HCT116 (cell line): ENCODE measurements at regions of chr7 and their contacts with region 1.

Region 1: GRCh38 chr7:28853834-28854749 is 104.0 kb downstream of the TRIL start:
- DNase-seq: peak; percentile 63
- ATAC-seq: peak; percentile 89
- H3K4me3 ChIP-seq: peak overlapping the region; percentile 41 to 54
- H3K27ac ChIP-seq: no peak overlapping the region
- H3K4me1 ChIP-seq: peaks cover 23 to 36% of the 10 kb centered on the region in 2 experiments
- H3K27me3 ChIP-seq: peaks cover 21% of the 10 kb centered on the region
- CTCF ChIP-seq: peak; percentile 73 to 84 (median 74)
- POLR2A ChIP-seq: no peak
- RAD21 ChIP-seq: peak; percentile 77

Region 2: GRCh38 chr7:28298870-28299518 is 555.1 kb before region 1 on chr7:
- CTCF ChIA-PET with region 1: interaction called, 3 read pairs
- POLR2A ChIA-PET with region 1: no interaction called
- RAD21 ChIA-PET with region 1: no interaction called
- intact Hi-C with region 1: loop called (anchors 2 kb)
- DNase-seq: peak; percentile 48
- ATAC-seq: peak; percentile 89
- H3K4me3 ChIP-seq: no peak overlapping the region
- H3K27ac ChIP-seq: no peak overlapping the region
- H3K4me1 ChIP-seq: peaks cover 0 to 3% of the 10 kb centered on the region in 2 experiments; a peak in 2 of 4 replicates
- H3K27me3 ChIP-seq: no peaks in the 10 kb centered on the region
- CTCF ChIP-seq: peak; percentile 56 to 64 (median 59)
- POLR2A ChIP-seq: no peak
- RAD21 ChIP-seq: peak; percentile 74

Region 3: GRCh38 chr7:28389504-28390395 is 464.3 kb before region 1 on chr7:
- CTCF ChIA-PET with region 1: no interaction called
- POLR2A ChIA-PET with region 1: no interaction called
- RAD21 ChIA-PET with region 1: no interaction called
- intact Hi-C with region 1: loop called (anchors 5 kb)
- DNase-seq: peak; percentile 49
- ATAC-seq: peak; percentile 77
- H3K4me3 ChIP-seq: peak overlapping the region; percentile 7 to 21; a peak in 3 of 4 replicates
- H3K27ac ChIP-seq: no peak overlapping the region
- H3K4me1 ChIP-seq: no peaks in the 10 kb centered on the region
- H3K27me3 ChIP-seq: no peaks in the 10 kb centered on the region
- CTCF ChIP-seq: peak; percentile 60 to 91 (median 62)
- POLR2A ChIP-seq: no peak
- RAD21 ChIP-seq: peak; percentile 65

Region 4: GRCh38 chr7:28953633-28954032 is 99.5 kb after region 1 on chr7:
- CTCF ChIA-PET with region 1: no interaction called
- POLR2A ChIA-PET with region 1: no interaction called
- RAD21 ChIA-PET with region 1: no interaction called
- intact Hi-C with region 1: no loop called
- DNase-seq: no peak
- ATAC-seq: no peak
- H3K4me3 ChIP-seq: no peak overlapping the region
- H3K27ac ChIP-seq: no peak overlapping the region
- H3K4me1 ChIP-seq: no peaks in the 10 kb centered on the region
- H3K27me3 ChIP-seq: no peaks in the 10 kb centered on the region
- CTCF ChIP-seq: no peak
- POLR2A ChIP-seq: no peak
- RAD21 ChIP-seq: no peak

Region 5: DNA sequence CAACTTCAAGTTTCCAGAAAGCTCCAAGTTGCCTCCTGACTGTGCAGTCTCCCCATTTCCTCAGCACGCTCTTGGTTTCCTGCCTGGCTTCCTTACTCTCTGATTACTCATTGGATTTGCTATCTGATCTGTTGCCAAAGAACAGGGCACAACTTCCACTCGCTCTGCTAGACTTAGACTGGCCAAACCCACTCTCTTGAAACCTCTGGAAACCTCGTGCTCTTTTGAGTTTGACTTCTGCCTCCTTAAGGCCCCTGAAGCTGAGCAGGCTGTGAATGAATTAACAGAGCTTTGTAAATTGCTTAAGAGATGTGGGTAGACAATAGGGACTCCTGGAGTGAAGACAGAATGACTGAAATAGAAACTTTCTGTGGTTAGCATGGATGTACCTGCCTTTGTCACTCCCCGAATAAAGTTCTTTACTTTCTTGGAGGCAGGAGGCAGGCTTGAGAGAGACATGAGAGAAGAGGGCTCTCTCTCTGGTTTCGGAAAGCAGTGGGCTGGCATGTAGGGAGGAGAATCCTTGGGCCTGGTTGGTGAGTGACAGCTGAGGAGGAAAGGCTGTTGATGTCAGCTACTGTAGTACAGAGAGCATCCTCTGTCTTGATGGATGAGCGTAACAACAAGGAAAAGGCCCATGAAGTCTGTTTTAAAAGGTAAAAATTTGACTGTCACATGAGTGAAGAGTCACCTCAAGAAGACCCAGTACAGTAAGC is 411.3 kb after region 1 on chr7:
- CTCF ChIA-PET with region 1: no interaction called
- POLR2A ChIA-PET with region 1: no interaction called
- RAD21 ChIA-PET with region 1: no interaction called
- intact Hi-C with region 1: no loop called
- DNase-seq: no peak
- ATAC-seq: no peak
- H3K4me3 ChIP-seq: no peak overlapping the region
- H3K27ac ChIP-seq: no peak overlapping the region
- H3K4me1 ChIP-seq: peaks cover 4 to 5% of the 10 kb centered on the region in 2 experiments; a peak in 3 of 4 replicates
- H3K27me3 ChIP-seq: peaks cover 4% of the 10 kb centered on the region; the same call in 1 of the 2 replicates
- CTCF ChIP-seq: no peak
- POLR2A ChIP-seq: no peak
- RAD21 ChIP-seq: no peak

Region 6: GRCh38 chr7:29370531-29371314 is 516.6 kb after region 1 on chr7:
- CTCF ChIA-PET with region 1: no interaction called
- POLR2A ChIA-PET with region 1: no interaction called
- RAD21 ChIA-PET with region 1: no interaction called
- intact Hi-C with region 1: no loop called
- DNase-seq: peak; percentile 43
- ATAC-seq: peak; percentile 87
- H3K4me3 ChIP-seq: no peak overlapping the region
- H3K27ac ChIP-seq: no peak overlapping the region
- H3K4me1 ChIP-seq: peaks cover 8 to 27% of the 10 kb centered on the region in 2 experiments
- H3K27me3 ChIP-seq: no peaks in the 10 kb centered on the region
- CTCF ChIP-seq: no peak
- POLR2A ChIP-seq: no peak
- RAD21 ChIP-seq: no peak